Motor neuron (in vitro differentiated cells): ENCODE measurements at regions of chr12 and their contacts with region 1.

Region 1: GRCh38 chr12:69254046-69254445 is 14.7 kb downstream of the CPSF6 start:
- ATAC-seq: peak in 3 of 8 experiments; percentile 23 to 46 (median 39)
- H3K4me3 ChIP-seq: no peak overlapping the region
- H3K27ac ChIP-seq: no peak overlapping the region
- H3K4me1 ChIP-seq: no peaks in the 10 kb centered on the region

Region 2: DNA sequence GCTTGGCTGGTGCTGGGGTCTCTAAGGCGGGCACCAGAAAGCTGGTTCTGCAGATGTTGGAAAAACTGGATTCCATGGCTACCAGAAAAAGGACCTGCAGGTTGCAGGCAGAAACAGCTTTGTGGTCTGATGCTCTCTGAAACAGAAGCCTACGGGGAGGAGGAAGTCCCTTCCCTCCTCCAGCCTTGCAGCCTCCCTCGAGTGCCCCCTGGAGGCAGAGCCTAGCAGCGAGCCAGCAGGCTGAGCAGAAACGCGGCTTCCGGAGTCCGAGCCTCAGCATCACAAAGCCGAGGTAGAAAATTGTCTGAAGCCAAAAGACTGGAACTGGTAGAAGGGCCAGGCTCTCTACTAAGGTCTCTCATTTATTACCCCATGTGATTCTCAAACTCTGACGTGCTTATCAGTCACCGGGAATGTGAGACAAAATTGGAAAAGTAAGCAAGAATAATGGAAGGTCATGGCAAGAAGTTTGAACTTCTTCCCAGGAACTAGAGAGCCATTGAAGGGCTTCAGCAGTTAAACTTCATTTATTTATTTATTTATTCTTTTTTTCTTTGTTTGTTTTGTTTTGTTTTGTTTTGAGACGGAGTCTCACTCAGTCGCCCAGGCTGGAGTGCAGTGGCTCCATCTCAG is 96.9 kb before region 1 on chr12:
- in situ Hi-C with region 1: loop called in 1 of 9 experiments (anchors 10 kb)
- ATAC-seq: peak; percentile 63 to 99 (median 72)
- H3K4me3 ChIP-seq: no peak overlapping the region
- H3K27ac ChIP-seq: no peak overlapping the region
- H3K4me1 ChIP-seq: peaks cover 2 to 10% of the 10 kb centered on the region in 2 donors

Region 3: DNA sequence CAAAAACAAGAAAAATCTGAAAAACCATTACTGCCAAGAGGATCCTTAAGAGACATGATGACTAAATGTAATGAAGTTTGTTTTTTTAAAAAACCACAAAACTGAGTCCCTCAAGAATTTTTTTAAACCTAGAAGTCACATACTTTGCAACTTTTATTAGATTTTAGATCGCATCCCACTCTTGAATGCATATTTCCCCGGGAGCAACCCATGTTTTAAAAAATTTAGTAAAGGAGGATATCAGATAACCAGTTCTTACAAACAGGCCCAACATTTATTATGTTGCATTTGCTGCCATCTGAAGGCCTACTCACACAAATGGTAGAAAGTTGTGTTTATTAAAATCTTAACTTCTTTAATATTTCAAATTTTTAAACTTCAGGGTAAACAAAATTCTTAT is 286.9 kb after region 1 on chr12:
- in situ Hi-C with region 1: no loop called
- ATAC-seq: no peak
- H3K4me3 ChIP-seq: no peak overlapping the region
- H3K27ac ChIP-seq: no peak overlapping the region
- H3K4me1 ChIP-seq: no peaks in the 10 kb centered on the region